ENCODE measurements at regions of chr4 and their contacts with region 1.

Region 1: DNA sequence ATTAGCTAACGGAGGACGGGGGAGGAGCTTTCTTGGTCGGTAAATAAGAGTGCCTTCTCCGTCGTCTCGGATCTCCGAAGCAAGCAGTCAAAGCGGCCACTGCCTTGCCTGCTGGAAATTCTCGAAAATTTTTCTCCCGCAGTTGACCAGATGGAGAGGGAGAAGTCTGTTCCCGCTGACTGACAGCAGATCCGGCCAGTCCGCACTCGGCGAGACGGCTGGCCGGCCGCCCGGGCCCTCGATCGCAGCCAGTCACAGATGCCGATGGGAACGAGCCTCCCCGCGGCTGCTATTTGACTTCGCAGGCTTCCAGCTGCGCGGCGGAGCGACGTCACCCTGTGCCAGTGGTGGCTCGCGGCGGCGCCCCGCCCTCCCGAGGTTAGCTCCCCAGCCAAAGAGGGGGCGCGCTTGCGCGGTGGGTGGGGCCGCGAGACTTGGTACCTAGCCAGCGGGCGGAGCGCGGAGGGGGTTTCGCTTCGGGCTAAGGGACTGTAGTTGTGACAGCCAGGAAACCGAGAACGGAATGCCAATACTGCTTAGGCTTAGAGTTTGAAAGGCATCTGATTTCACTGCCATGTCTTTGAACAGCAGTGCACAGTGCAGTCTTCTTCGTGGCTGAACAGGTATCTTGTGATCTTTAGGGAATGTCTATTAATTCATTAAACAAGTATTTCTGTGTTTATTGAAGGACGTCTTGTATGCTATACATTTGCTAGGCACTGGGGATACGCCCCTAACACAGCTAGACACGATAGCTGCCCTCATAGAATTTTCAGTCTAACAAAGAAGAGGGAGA is at the start of gene PPM1K:
- DNase-seq: peak; percentile 99 to 100 (median 99)
- ATAC-seq: peak; percentile 82
- H3K4me3 ChIP-seq: peak within 1 kb of the TSS; percentile 79 to 99
- H3K4me3 Mint-ChIP-seq: peak within 1 kb of the TSS; percentile 84
- H3K27ac ChIP-seq: peak within 1 kb of the TSS; percentile 97 to 99
- H3K27ac Mint-ChIP-seq: peak within 1 kb of the TSS; percentile 94
- H3K4me1 ChIP-seq: peaks cover 39% of the 10 kb centered on the region
- H3K4me1 Mint-ChIP-seq: peaks cover 46% of the 10 kb centered on the region
- H3K27me3 ChIP-seq: no peaks in the 10 kb centered on the region
- H3K27me3 Mint-ChIP-seq: no peaks in the 10 kb centered on the region
- CTCF ChIP-seq: no peak
- total RNA-seq, gene PPM1K: 59.8 to 61.0 TPM

Region 2: GRCh38 chr4:87130985-87131703 is 1153.5 kb before region 1 on chr4:
- CTCF ChIA-PET with region 1: no interaction called
- POLR2A ChIA-PET with region 1: no interaction called
- intact Hi-C with region 1: no loop called
- DNase-seq: no peak
- ATAC-seq: no peak
- H3K4me3 ChIP-seq: no peak overlapping the region
- H3K4me3 Mint-ChIP-seq: no peak overlapping the region
- H3K27ac ChIP-seq: no peak overlapping the region
- H3K27ac Mint-ChIP-seq: no peak overlapping the region
- H3K4me1 ChIP-seq: no peaks in the 10 kb centered on the region
- H3K4me1 Mint-ChIP-seq: no peaks in the 10 kb centered on the region
- H3K27me3 ChIP-seq: no peaks in the 10 kb centered on the region
- H3K27me3 Mint-ChIP-seq: no peaks in the 10 kb centered on the region
- CTCF ChIP-seq: no peak

Region 3: DNA sequence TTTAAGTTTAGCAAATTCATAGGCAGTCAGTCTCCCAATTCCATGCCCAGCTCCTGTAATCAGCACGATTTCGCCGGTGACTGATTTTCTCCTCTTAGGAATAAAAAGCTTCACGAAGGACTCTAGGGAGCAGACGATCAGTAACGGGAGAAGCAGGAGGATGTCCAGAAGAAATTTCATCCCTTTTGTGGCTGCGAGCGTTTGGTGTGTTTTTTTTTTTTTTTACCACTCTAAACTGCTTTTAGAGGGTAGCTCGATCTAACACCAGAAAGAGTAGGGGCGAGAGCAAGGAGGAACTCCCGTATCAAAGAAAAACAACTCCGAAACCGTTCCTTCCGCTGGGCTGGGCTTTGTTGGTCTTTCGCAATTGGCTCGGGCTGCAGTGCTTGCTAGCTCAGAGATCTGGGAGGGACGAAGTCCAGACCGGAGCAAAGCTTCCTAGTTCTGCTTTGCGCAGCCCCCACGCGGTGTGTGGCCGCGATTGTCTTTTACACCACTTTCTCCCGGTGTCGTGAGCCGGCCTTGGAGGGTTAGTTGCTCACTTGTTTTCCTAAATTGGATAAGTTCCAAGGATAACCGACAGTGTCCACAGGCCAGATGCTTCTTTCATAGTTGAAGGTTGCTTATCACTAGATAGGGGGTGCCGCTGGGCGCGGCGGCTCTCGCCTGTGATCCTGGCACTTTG is 893.6 kb before region 1 on chr4 and contains the start of gene HSD17B11:
- CTCF ChIA-PET with region 1: no interaction called
- POLR2A ChIA-PET with region 1: no interaction called
- intact Hi-C with region 1: loop called in 1 of 2 experiments (anchors 10 kb)
- DNase-seq: peak; percentile 65 to 93 (median 84)
- ATAC-seq: peak; percentile 98
- H3K4me3 ChIP-seq: peak within 1 kb of the TSS; percentile 52 to 83
- H3K4me3 Mint-ChIP-seq: peak within 1 kb of the TSS; percentile 98
- H3K27ac ChIP-seq: peak within 1 kb of the TSS; percentile 57 to 84
- H3K27ac Mint-ChIP-seq: peak within 1 kb of the TSS; percentile 91
- H3K4me1 ChIP-seq: peaks cover 29% of the 10 kb centered on the region
- H3K4me1 Mint-ChIP-seq: peaks cover 55% of the 10 kb centered on the region
- H3K27me3 ChIP-seq: no peaks in the 10 kb centered on the region
- H3K27me3 Mint-ChIP-seq: no peaks in the 10 kb centered on the region
- CTCF ChIP-seq: no peak
- total RNA-seq, gene HSD17B11: 38.8 to 42.4 TPM

Region 4: GRCh38 chr4:88244816-88245579 is 39.6 kb before region 1 on chr4:
- CTCF ChIA-PET with region 1: no interaction called
- POLR2A ChIA-PET with region 1: interaction called, 20 read pairs
- intact Hi-C with region 1: loop called in 1 of 2 experiments (anchors 2 kb)
- DNase-seq: peak in 8 of 9 experiments; percentile 24 to 71 (median 44)
- ATAC-seq: peak; percentile 84
- H3K4me3 ChIP-seq: peak overlapping the region in 1 of 2 experiments; percentile 30
- H3K4me3 Mint-ChIP-seq: peak overlapping the region; percentile 81
- H3K27ac ChIP-seq: peak overlapping the region in 1 of 2 experiments; percentile 19
- H3K27ac Mint-ChIP-seq: peak overlapping the region; percentile 79
- H3K4me1 ChIP-seq: peaks cover 9% of the 10 kb centered on the region
- H3K4me1 Mint-ChIP-seq: peaks cover 13% of the 10 kb centered on the region
- H3K27me3 ChIP-seq: no peaks in the 10 kb centered on the region
- H3K27me3 Mint-ChIP-seq: no peaks in the 10 kb centered on the region
- CTCF ChIP-seq: no peak

Region 5: DNA sequence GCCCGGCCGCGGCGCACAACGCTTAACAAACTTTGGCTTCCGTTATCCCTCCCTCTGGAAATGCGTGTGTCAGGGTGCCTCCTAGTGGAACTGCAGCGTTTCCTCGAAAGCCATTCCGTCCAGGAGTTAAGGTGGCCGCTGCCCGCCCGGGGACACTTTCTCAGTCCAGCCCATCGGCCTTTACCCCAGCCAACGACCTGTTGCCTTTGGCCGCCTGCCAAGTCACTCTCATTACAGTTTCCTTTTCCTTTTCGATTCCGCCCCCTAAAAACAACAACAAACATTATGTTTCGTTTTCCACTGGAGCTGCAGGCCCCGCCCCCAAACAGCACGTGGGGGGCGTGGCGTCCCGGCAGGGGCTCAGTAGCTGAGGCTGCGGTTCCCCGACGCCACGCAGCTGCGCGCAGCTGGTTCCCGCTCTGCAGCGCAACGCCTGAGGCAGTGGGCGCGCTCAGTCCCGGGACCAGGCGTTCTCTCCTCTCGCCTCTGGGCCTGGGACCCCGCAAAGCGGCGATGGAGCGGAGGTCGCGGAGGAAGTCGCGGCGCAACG is 172.2 kb after region 1 on chr4 and contains the start of gene HERC5:
- CTCF ChIA-PET with region 1: interaction called, 3 read pairs
- POLR2A ChIA-PET with region 1: interaction called, 39 read pairs
- intact Hi-C with region 1: loop called (anchors 1 to 2 kb)
- DNase-seq: peak; percentile 83 to 96 (median 91)
- ATAC-seq: peak; percentile 95
- H3K4me3 ChIP-seq: peak within 1 kb of the TSS; percentile 79 to 87
- H3K4me3 Mint-ChIP-seq: peak within 1 kb of the TSS; percentile 100
- H3K27ac ChIP-seq: peak within 1 kb of the TSS; percentile 63 to 74
- H3K27ac Mint-ChIP-seq: peak within 1 kb of the TSS; percentile 100
- H3K4me1 ChIP-seq: peaks cover 13% of the 10 kb centered on the region
- H3K4me1 Mint-ChIP-seq: peaks cover 33% of the 10 kb centered on the region
- H3K27me3 ChIP-seq: no peaks in the 10 kb centered on the region
- H3K27me3 Mint-ChIP-seq: no peaks in the 10 kb centered on the region
- CTCF ChIP-seq: no peak
- total RNA-seq, gene HERC5: 13.2 to 13.5 TPM

Region 6: DNA sequence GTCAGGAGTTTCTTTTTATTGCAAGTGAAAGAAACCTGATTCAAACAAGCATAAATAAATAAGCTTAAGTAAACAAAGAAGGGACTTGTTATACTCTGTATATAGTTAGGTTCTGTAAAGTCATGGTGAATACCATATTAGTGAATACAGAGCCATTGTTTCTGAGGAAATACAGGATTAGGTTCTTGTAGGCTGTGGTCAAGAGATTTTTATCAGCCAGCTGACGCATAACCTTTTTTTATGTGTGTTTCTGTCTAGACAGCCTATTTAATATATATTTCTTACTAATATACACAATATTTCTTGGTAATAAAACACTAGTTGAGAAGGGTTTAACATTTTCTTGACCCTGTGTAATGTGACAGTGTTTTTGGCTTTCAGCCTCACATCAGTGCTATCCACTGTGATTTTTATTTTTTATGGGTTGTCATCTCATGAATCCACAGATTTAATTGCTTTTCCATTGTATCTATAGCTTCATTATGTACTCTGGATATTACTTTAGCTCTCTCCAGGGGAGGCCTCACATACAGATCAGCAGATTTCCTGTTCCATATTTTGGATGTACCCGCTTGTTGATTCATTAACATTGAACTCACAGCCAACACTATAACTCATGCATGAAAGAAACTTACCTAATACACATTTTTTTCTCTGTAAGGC is 315.7 kb after region 1 on chr4:
- CTCF ChIA-PET with region 1: no interaction called
- POLR2A ChIA-PET with region 1: no interaction called
- intact Hi-C with region 1: loop called in 1 of 2 experiments (anchors 5 kb)
- DNase-seq: peak in 2 of 9 experiments; percentile 31 to 34
- ATAC-seq: peak; percentile 31
- H3K4me3 ChIP-seq: no peak overlapping the region
- H3K4me3 Mint-ChIP-seq: no peak overlapping the region
- H3K27ac ChIP-seq: peak overlapping the region in 1 of 2 experiments; percentile 31
- H3K27ac Mint-ChIP-seq: no peak overlapping the region
- H3K4me1 ChIP-seq: peaks cover 31% of the 10 kb centered on the region
- H3K4me1 Mint-ChIP-seq: peaks cover 78% of the 10 kb centered on the region
- H3K27me3 ChIP-seq: no peaks in the 10 kb centered on the region
- H3K27me3 Mint-ChIP-seq: no peaks in the 10 kb centered on the region
- CTCF ChIP-seq: no peak

Region 7: GRCh38 chr4:89110986-89111832 is 826.6 kb after region 1 on chr4 and contains the start of gene TIGD2:
- CTCF ChIA-PET with region 1: no interaction called
- POLR2A ChIA-PET with region 1: no interaction called
- intact Hi-C with region 1: loop called in 1 of 2 experiments (anchors 2 kb)
- DNase-seq: peak; percentile 78 to 96 (median 88)
- ATAC-seq: peak; percentile 94
- H3K4me3 ChIP-seq: peak within 1 kb of the TSS; percentile 75 to 80
- H3K4me3 Mint-ChIP-seq: peak within 1 kb of the TSS; percentile 89
- H3K27ac ChIP-seq: peak within 1 kb of the TSS; percentile 63 to 66
- H3K27ac Mint-ChIP-seq: peak within 1 kb of the TSS; percentile 79
- H3K4me1 ChIP-seq: peaks cover 16% of the 10 kb centered on the region
- H3K4me1 Mint-ChIP-seq: peaks cover 24% of the 10 kb centered on the region
- H3K27me3 ChIP-seq: no peaks in the 10 kb centered on the region
- H3K27me3 Mint-ChIP-seq: no peaks in the 10 kb centered on the region
- CTCF ChIP-seq: peak; percentile 68
- total RNA-seq, gene TIGD2: 2.4 to 2.9 TPM

Measured in CD8-positive, alpha-beta T cell (primary cell).